PC-9 (cell line): ENCODE measurements at regions of chr2 and their contacts with region 1.

Region 1: DNA sequence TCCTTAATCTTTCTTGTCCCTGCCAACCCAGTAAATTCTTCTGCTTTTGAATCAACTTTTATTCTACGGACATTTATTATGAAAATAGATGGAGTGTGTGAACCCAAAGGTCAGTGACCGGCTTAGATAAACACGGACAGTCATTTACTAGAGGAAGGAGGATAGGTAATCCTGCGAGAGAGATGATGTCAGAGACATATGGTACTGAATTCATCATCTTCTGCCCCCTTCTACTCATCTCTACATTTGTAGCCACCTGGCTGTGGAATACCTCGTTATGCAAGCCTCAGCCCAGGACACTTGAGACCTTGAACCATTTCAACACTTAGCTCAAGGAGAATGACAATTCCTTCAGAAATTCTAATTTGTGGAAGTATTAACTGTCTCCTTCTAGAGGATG is 443.6 kb downstream of the TDRD15 start:
- DNase-seq: no peak
- H3K4me3 ChIP-seq: no peak overlapping the region
- H3K27ac ChIP-seq: no peak overlapping the region
- H3K4me1 ChIP-seq: no peaks in the 10 kb centered on the region
- H3K27me3 ChIP-seq: no peaks in the 10 kb centered on the region; the same call in 1 of the 2 replicates
- CTCF ChIP-seq: no peak

Region 2: DNA sequence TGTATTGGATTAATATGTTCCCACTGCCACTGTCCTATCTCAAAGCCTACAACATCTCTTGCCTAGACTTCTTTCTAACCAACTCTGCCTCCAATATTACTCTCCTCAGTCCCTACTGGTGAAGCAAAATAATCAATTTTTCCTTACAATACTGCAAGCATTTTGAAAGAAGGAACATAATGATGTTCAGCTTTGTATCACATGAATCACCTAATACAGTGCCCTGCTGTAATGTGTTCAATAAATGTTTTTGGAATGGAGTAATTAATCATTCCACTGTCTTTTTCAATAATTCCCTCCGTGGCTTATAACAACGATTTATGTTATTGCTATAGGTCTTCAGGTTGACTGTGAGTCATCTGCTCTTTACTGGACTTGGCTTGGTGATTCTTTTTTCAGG is 87.2 kb before region 1 on chr2:
- CTCF ChIA-PET with region 1: no interaction called
- POLR2A ChIA-PET with region 1: interaction called, 29 read pairs
- intact Hi-C with region 1: no loop called
- DNase-seq: no peak
- H3K4me3 ChIP-seq: no peak overlapping the region
- H3K27ac ChIP-seq: no peak overlapping the region
- H3K4me1 ChIP-seq: no peaks in the 10 kb centered on the region
- H3K27me3 ChIP-seq: no peaks in the 10 kb centered on the region
- CTCF ChIP-seq: no peak

Region 3: DNA sequence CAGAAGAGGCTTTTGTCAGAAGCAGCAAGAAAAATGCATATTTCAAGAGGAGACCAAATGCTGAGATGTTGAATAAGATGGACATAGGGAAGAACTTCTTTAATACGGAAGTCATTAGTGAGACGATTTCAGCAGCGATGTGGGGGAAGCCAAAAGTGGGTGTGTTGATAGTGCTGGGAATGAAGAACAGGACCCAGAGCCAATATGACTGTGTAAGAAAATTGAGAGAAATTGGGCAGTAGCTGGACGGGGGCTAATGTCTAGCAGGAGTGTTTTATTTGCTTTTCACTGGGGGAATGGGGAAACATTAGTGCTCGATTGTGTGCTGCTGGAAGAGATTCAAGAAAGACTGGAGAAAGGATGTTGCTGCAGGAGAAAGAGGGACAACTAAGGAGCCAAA is 1028.9 kb after region 1 on chr2:
- CTCF ChIA-PET with region 1: no interaction called
- POLR2A ChIA-PET with region 1: no interaction called
- intact Hi-C with region 1: no loop called
- DNase-seq: no peak
- H3K4me3 ChIP-seq: no peak overlapping the region
- H3K27ac ChIP-seq: no peak overlapping the region
- H3K4me1 ChIP-seq: no peaks in the 10 kb centered on the region
- H3K27me3 ChIP-seq: no peaks in the 10 kb centered on the region; the same call in 1 of the 2 replicates
- CTCF ChIP-seq: no peak